ENCODE measurements at regions of chr13 and their contacts with region 1.

Region 1: DNA sequence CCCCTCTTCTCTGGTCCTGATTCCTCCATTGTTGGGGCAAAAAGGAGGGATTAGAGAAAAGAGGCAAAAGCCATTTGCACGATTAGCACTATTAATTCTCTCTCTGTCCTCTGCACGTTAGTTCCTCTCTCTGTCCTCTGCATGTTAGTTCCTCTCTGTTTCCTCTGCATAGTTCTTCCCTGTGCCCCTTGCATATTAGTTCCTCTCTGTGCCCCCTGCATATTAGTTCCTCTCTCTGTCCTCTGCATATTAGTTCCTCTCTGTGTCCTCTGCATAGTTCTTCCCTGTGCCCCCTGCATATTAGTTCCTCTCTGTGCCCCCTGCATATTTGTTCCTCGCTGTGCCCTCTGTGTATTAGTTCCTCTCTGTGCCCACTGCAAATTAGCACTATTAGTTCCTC is 847.2 kb upstream of the GPC6 start:
- DNase-seq: no peak
- H3K4me3 ChIP-seq: no peak overlapping the region
- H3K27ac ChIP-seq: no peak overlapping the region
- H3K4me1 ChIP-seq: no peaks in the 10 kb centered on the region
- H3K27me3 ChIP-seq: no peaks in the 10 kb centered on the region
- CTCF ChIP-seq: no peak
- POLR2A ChIP-seq: no peak

Region 2: GRCh38 chr13:91922969-91923592 is 456.3 kb before region 1 on chr13:
- intact Hi-C with region 1: loop called (anchors 5 kb)
- DNase-seq: no peak
- H3K4me3 ChIP-seq: no peak overlapping the region
- H3K27ac ChIP-seq: no peak overlapping the region
- H3K4me1 ChIP-seq: no peaks in the 10 kb centered on the region
- H3K27me3 ChIP-seq: no peaks in the 10 kb centered on the region
- CTCF ChIP-seq: no peak
- POLR2A ChIP-seq: no peak

Region 3: GRCh38 chr13:92265408-92265807 is 114.0 kb before region 1 on chr13:
- intact Hi-C with region 1: no loop called
- DNase-seq: no peak
- H3K4me3 ChIP-seq: no peak overlapping the region
- H3K27ac ChIP-seq: no peak overlapping the region
- H3K4me1 ChIP-seq: no peaks in the 10 kb centered on the region
- H3K27me3 ChIP-seq: no peaks in the 10 kb centered on the region
- CTCF ChIP-seq: no peak
- POLR2A ChIP-seq: no peak

Region 4: DNA sequence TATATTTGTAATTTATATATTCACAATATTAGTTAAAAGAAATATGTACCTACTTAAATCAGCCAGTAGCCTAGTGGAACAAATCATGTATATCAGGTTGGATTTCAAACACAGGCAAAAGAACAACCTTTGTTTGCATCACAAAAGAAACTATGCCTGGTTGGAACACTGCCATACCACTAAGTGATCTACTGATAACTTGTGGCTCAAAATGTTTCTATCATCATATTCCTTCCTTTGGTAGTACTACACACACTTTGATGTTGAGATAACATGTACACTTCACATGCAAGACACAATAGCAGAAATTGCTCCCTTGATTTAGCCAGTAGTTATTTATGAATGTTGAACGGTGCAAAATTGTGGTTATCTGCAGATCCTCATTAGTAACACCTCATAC is 701.2 kb after region 1 on chr13:
- intact Hi-C with region 1: no loop called
- DNase-seq: no peak
- H3K4me3 ChIP-seq: no peak overlapping the region
- H3K27ac ChIP-seq: no peak overlapping the region
- H3K4me1 ChIP-seq: no peaks in the 10 kb centered on the region
- H3K27me3 ChIP-seq: no peaks in the 10 kb centered on the region
- CTCF ChIP-seq: no peak
- POLR2A ChIP-seq: no peak

Measured in vagina (tissue), 2 donors.